WTC11 (cell line): ENCODE measurements at regions of chr10 and their contacts with region 1.

Region 1: GRCh38 chr10:117216611-117217195 is 19.4 kb downstream of the KCNK18 start:
- DNase-seq: peak; percentile 83
- ATAC-seq: peak; percentile 52
- H3K4me3 Mint-ChIP-seq: peak overlapping the region; percentile 76
- H3K27ac Mint-ChIP-seq: no peak overlapping the region
- H3K4me1 Mint-ChIP-seq: peaks cover 17% of the 10 kb centered on the region
- H3K27me3 Mint-ChIP-seq: peaks cover 72% of the 10 kb centered on the region
- CTCF ChIP-seq: peak; percentile 99

Region 2: GRCh38 chr10:117139581-117140524 is 76.8 kb before region 1 on chr10:
- CTCF ChIA-PET with region 1: no interaction called
- POLR2A ChIA-PET with region 1: no interaction called
- DNase-seq: peak; percentile 50
- ATAC-seq: peak; percentile 8
- H3K4me3 Mint-ChIP-seq: peak overlapping the region; percentile 53
- H3K27ac Mint-ChIP-seq: no peak overlapping the region
- H3K4me1 Mint-ChIP-seq: peaks cover 35% of the 10 kb centered on the region
- H3K27me3 Mint-ChIP-seq: peaks cover 97% of the 10 kb centered on the region
- CTCF ChIP-seq: no peak

Region 3: GRCh38 chr10:117159390-117159789 is 57.3 kb before region 1 on chr10:
- CTCF ChIA-PET with region 1: no interaction called
- POLR2A ChIA-PET with region 1: no interaction called
- DNase-seq: peak; percentile 60
- ATAC-seq: peak; percentile 36
- H3K4me3 Mint-ChIP-seq: 0 out of 2 replicates have a peak overlapping the region, but pooled peaks have one; percentile 1
- H3K27ac Mint-ChIP-seq: no peak overlapping the region
- H3K4me1 Mint-ChIP-seq: peaks cover 53% of the 10 kb centered on the region
- H3K27me3 Mint-ChIP-seq: peaks cover 100% of the 10 kb centered on the region
- CTCF ChIP-seq: no peak

Region 4: GRCh38 chr10:117226824-117227451 is 10.2 kb after region 1 on chr10:
- CTCF ChIA-PET with region 1: interaction called, 81 read pairs
- POLR2A ChIA-PET with region 1: no interaction called
- DNase-seq: peak; percentile 68
- ATAC-seq: peak; percentile 97
- H3K4me3 Mint-ChIP-seq: no peak overlapping the region
- H3K27ac Mint-ChIP-seq: no peak overlapping the region
- H3K4me1 Mint-ChIP-seq: peaks cover 14% of the 10 kb centered on the region
- H3K27me3 Mint-ChIP-seq: peaks cover 8% of the 10 kb centered on the region; the same call in 1 of the 2 replicates
- CTCF ChIP-seq: no peak

Region 5: DNA sequence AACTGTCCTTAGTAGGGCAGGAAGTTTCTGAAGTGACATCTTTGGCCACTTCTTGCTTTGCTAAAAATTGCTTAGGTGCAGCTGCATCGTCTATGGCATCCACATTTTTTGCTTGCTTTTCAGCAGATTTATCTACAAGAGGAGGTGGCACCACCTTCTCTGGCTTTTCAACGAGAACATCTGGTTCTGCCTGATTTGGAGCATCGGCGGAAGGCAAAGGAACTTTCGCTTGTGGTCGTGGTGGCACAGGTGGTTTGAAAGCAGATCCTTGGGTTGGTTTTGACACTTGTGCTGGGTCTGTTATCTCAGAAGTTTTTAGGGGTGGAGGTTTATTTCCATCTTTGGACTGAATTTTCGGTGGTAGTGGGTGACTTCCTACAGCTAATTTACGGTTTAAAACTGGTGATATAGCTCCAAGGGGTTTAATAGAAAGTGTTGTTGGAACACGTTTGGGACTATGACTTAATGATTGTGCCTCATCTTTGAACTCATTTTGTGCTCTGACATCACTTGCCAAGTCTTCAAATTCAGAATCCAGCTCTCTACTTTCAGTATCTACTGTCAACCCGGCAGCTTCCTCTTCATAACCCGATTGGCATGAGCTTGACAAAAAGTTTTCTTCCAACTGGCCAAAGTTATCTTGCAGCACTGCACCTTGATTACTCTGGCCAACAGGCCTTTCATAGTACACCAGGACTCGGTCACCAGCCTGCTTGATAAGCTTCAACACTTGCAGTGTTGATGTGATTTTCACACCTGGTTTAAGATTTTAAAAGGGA is 68.2 kb after region 1 on chr10:
- CTCF ChIA-PET with region 1: interaction called, 13 read pairs
- POLR2A ChIA-PET with region 1: no interaction called
- DNase-seq: no peak
- ATAC-seq: no peak
- H3K4me3 Mint-ChIP-seq: no peak overlapping the region
- H3K27ac Mint-ChIP-seq: no peak overlapping the region
- H3K4me1 Mint-ChIP-seq: peaks cover 4% of the 10 kb centered on the region; the same call in 1 of the 2 replicates
- H3K27me3 Mint-ChIP-seq: no peaks in the 10 kb centered on the region
- CTCF ChIP-seq: no peak

Region 6: GRCh38 chr10:117431160-117431559 is 214.5 kb after region 1 on chr10:
- CTCF ChIA-PET with region 1: interaction called, 12 read pairs
- POLR2A ChIA-PET with region 1: no interaction called
- DNase-seq: no peak
- ATAC-seq: no peak
- H3K4me3 Mint-ChIP-seq: no peak overlapping the region
- H3K27ac Mint-ChIP-seq: no peak overlapping the region
- H3K4me1 Mint-ChIP-seq: peaks cover 24% of the 10 kb centered on the region
- H3K27me3 Mint-ChIP-seq: peaks cover 10% of the 10 kb centered on the region
- CTCF ChIP-seq: no peak

Region 7: GRCh38 chr10:117472872-117473271 is 256.2 kb after region 1 on chr10:
- CTCF ChIA-PET with region 1: interaction called, 14 read pairs
- POLR2A ChIA-PET with region 1: no interaction called
- DNase-seq: no peak
- ATAC-seq: no peak
- H3K4me3 Mint-ChIP-seq: no peak overlapping the region
- H3K27ac Mint-ChIP-seq: no peak overlapping the region
- H3K4me1 Mint-ChIP-seq: no peaks in the 10 kb centered on the region; the same call in 1 of the 2 replicates
- H3K27me3 Mint-ChIP-seq: peaks cover 11% of the 10 kb centered on the region
- CTCF ChIP-seq: no peak